Activated CD4-positive, alpha-beta T cell treated with anti-CD3 and anti-CD28 coated beads, Interleukin-2, amount 10 ng/mL, durations not matched to agents 24 days and 14 days (primary cell): ENCODE measurements at regions of chr13 and their contacts with region 1.

Region 1: GRCh38 chr13:32650705-32651311 is 64.6 kb downstream of the PDS5B start:
- DNase-seq: peak; percentile 87
- H3K4me3 Mint-ChIP-seq: no peak overlapping the region
- H3K27ac Mint-ChIP-seq: no peak overlapping the region
- H3K4me1 Mint-ChIP-seq: peaks cover 29% of the 10 kb centered on the region
- H3K27me3 Mint-ChIP-seq: no peaks in the 10 kb centered on the region

Region 2: GRCh38 chr13:32538621-32539246 is 112.1 kb before region 1 on chr13 and contains the start of gene N4BP2L2:
- intact Hi-C with region 1: loop called (anchors 5 kb)
- DNase-seq: peak; percentile 97
- H3K4me3 Mint-ChIP-seq: peak within 1 kb of the TSS; percentile 98
- H3K27ac Mint-ChIP-seq: peak within 1 kb of the TSS; percentile 99
- H3K4me1 Mint-ChIP-seq: peaks cover 37% of the 10 kb centered on the region
- H3K27me3 Mint-ChIP-seq: peaks cover 8% of the 10 kb centered on the region
- total RNA-seq, gene N4BP2L2: 87.5 and 88.0 TPM in 2 replicates

Region 3: GRCh38 chr13:32669030-32669646 is 18.3 kb after region 1 on chr13:
- intact Hi-C with region 1: loop called (anchors 2 kb)
- DNase-seq: peak; percentile 69
- H3K4me3 Mint-ChIP-seq: no peak overlapping the region
- H3K27ac Mint-ChIP-seq: no peak overlapping the region
- H3K4me1 Mint-ChIP-seq: peaks cover 4% of the 10 kb centered on the region
- H3K27me3 Mint-ChIP-seq: no peaks in the 10 kb centered on the region

Region 4: DNA sequence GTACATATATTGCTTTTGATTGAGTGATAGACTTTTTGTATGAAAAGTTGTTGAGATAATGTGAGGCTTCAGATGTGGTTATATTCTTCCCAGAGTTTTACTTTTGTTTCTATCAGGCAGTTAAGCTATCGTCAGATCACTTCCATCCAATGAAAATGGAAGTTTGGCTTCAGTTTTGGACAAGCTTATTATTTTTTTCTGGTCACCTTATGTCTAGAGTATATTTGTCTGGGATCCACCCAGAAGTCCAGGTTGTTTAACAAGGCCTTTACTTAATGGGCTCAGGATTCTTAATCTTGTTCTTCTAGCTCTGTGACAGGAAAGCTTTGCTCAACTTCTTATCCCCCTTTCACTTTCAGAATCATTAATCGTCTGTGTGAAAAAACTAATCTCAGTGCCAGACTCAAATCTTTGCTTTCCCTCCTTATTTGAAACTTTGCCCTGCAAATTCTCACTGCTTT is 86.3 kb after region 1 on chr13:
- intact Hi-C with region 1: loop called (anchors 5 kb)
- DNase-seq: peak; percentile 73
- H3K4me3 Mint-ChIP-seq: peak overlapping the region; percentile 82
- H3K27ac Mint-ChIP-seq: peak overlapping the region; percentile 81
- H3K4me1 Mint-ChIP-seq: peaks cover 31% of the 10 kb centered on the region
- H3K27me3 Mint-ChIP-seq: no peaks in the 10 kb centered on the region